Activated CD8-positive, alpha-beta T cell treated with anti-CD3 and anti-CD28 coated beads for 36 hours (primary cell): ENCODE measurements at regions of chr3 and their contacts with region 1.

Region 1: GRCh38 chr3:190321789-190322603 is at the start of gene CLDN1:
- DNase-seq: peak; percentile 78
- ATAC-seq: peak; percentile 82
- H3K4me3 Mint-ChIP-seq: peak within 1 kb of the TSS; percentile 66
- H3K27ac Mint-ChIP-seq: no peak within 1 kb of the TSS
- H3K4me1 Mint-ChIP-seq: peaks cover 28% of the 10 kb centered on the region
- H3K27me3 Mint-ChIP-seq: peaks cover 33% of the 10 kb centered on the region
- CTCF ChIP-seq: peak; percentile 94
- total RNA-seq, gene CLDN1: 0.58 to 0.77 TPM

Region 2: GRCh38 chr3:189967254-189967865 is 354.6 kb before region 1 on chr3:
- CTCF ChIA-PET with region 1: interaction called, 14 read pairs
- POLR2A ChIA-PET with region 1: no interaction called
- intact Hi-C with region 1: loop called (anchors 10 kb)
- DNase-seq: peak; percentile 14
- ATAC-seq: peak; percentile 60
- H3K4me3 Mint-ChIP-seq: no peak overlapping the region
- H3K27ac Mint-ChIP-seq: no peak overlapping the region
- H3K4me1 Mint-ChIP-seq: no peaks in the 10 kb centered on the region
- H3K27me3 Mint-ChIP-seq: peaks cover 8% of the 10 kb centered on the region
- CTCF ChIP-seq: peak; percentile 85

Region 3: DNA sequence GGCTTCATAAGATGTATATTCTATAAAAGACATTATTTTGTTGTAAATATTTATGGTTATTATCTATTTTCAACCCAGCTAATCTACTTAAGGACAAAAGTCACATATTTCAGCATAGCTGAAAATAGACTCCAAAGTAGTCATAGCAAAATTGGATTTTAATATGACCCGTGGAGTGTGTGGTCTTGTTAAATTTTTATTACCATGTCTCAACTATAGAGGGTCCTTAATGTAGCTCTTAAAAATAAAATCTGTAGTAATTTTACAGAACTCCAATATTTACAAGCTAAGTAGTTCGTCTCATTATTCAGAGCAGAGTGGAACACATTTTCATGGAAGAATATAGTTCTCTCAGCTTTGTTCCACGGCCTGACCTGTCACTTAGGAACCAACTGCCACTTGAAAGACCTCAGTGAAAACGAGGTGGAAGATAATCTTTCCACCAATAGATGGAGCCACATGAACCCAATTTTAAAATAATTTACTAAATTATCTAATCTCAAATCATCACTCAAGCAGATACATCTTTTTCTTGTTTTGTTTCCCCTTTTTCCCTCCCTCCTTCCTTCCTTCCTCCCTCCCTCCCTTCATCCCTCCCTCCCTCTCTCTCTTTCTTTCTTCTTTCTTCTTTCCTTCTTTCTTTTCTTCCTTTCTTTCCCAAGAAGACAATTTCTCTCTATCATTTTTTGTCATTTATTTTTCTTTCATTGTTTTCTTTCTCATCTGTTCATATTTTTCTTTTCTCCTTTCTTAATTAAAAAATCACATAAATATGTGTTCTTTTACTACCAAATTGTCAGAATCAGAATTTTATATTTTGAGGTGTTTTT is 96.9 kb before region 1 on chr3:
- CTCF ChIA-PET with region 1: interaction called, 36 read pairs
- POLR2A ChIA-PET with region 1: no interaction called
- intact Hi-C with region 1: loop called (anchors 5 kb)
- DNase-seq: no peak
- ATAC-seq: no peak
- H3K4me3 Mint-ChIP-seq: no peak overlapping the region
- H3K27ac Mint-ChIP-seq: no peak overlapping the region
- H3K4me1 Mint-ChIP-seq: no peaks in the 10 kb centered on the region
- H3K27me3 Mint-ChIP-seq: peaks cover 6% of the 10 kb centered on the region
- CTCF ChIP-seq: peak; percentile 50

Region 4: DNA sequence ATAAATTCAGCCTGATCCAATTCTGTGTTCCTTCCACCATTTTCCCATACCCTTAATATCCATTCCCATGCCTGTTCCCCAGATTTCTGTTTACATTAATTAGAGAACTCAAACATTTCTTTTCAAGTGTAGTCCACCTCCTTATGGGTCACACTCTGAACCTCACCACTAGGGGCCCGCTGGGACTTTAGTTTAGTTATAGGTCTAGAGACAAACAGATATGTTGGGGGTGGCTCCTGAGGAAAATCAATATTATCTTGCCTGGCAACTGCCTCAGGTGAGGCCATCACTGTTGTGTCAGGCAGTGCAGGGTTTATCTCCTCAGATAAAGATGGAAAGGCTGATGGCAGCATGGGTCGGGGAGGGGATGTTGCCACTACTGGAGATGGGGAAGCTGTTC is 72.6 kb before region 1 on chr3:
- CTCF ChIA-PET with region 1: no interaction called
- POLR2A ChIA-PET with region 1: no interaction called
- intact Hi-C with region 1: no loop called
- DNase-seq: no peak
- ATAC-seq: no peak
- H3K4me3 Mint-ChIP-seq: no peak overlapping the region
- H3K27ac Mint-ChIP-seq: no peak overlapping the region
- H3K4me1 Mint-ChIP-seq: no peaks in the 10 kb centered on the region
- H3K27me3 Mint-ChIP-seq: peaks cover 8% of the 10 kb centered on the region
- CTCF ChIP-seq: no peak

Region 5: DNA sequence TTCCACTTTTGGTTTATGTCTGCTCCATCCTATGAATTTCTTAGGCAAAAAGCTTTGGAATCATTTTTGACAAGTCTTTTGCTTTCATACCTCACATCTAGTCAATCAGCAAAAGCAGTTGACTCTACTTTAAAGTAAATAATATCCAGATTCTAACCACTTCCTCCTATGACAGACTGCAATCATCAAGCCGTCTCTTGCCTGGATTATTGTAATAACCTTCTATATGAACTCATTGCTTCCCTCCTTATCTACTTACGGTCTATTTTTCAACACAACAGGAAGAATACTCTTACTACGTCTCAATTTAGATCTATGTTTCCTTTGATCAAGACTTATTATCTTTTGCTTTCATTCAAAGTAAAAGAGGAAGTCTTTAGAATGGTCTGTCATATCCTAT is 20.4 kb before region 1 on chr3:
- CTCF ChIA-PET with region 1: interaction called, 20 read pairs
- POLR2A ChIA-PET with region 1: interaction called, 5 read pairs
- intact Hi-C with region 1: no loop called
- DNase-seq: no peak
- ATAC-seq: peak; percentile 34
- H3K4me3 Mint-ChIP-seq: peak overlapping the region; percentile 7
- H3K27ac Mint-ChIP-seq: peak overlapping the region; percentile 52
- H3K4me1 Mint-ChIP-seq: peaks cover 29% of the 10 kb centered on the region
- H3K27me3 Mint-ChIP-seq: peaks cover 10% of the 10 kb centered on the region
- CTCF ChIP-seq: no peak

Region 6: DNA sequence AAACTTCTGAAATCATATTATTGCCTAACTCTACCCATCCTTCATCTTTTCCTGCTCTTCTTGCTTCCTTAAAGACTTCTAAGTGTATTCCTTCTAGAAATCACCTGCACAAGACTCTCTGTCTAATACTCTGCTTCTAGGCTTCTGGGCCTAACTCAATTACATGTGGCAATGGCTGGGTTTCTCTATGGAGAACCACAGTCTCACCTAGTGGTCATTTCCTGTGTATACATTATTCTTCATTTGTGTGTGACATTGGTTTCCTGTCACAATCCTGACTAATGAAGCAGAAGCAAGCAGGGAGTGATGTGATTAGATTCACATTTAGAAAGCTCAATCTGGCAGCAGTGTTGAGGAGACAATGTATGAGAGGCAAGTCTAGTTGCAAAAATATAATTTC is 17.1 kb after region 1 on chr3:
- CTCF ChIA-PET with region 1: interaction called, 12 read pairs
- POLR2A ChIA-PET with region 1: no interaction called
- intact Hi-C with region 1: no loop called
- DNase-seq: no peak
- ATAC-seq: peak; percentile 77
- H3K4me3 Mint-ChIP-seq: no peak overlapping the region
- H3K27ac Mint-ChIP-seq: no peak overlapping the region
- H3K4me1 Mint-ChIP-seq: peaks cover 3% of the 10 kb centered on the region
- H3K27me3 Mint-ChIP-seq: peaks cover 6% of the 10 kb centered on the region
- CTCF ChIP-seq: no peak